Gastrocnemius medialis (tissue), 4 donors: ENCODE measurements at regions of chr12 and their contacts with region 1.

Region 1: DNA sequence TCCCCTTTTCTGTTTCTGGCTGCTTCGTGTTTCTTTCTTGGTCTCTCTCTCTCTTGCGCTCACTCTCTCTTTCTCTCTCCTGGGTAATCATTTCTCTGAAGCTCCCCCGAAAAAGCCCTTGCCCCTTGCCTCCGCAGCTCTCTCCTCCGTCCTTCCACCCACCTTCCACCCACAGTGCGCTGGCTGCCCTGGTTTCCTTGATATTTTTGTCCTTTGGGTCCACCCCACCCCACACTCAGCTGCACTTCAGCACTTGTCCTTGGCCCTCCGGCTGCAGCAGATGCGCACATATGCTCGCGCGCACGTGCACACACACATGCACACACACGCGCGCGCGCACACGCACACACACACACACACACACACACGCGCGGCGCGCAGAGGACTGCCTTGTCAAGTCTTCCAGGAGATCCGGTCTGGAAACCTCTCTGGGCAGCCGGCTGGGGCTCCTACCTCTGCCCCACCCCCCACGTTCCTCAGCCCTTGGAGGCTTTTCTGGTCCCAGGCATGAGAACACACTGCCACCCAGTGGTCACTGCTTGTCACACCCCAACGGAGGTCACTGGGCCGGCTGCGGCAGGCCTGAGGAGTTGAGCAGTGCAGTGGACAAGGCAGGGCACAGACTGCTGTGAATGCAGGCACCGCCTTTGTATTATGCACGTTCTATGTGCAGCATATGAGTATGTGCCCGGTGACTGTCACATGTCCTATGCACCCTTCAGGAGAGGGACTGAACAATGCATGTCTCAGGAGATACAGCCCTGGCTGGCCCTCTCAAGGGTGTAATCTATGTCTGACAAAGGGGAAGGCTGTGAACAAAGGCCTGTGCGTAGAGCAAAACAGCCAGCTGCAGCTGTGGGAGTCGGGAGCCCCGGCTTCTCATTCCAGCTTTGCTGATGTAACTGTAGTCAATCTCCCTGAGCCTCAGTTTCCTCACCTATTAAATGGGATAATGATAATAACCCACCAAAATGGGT is 6.5 kb downstream of the LAG3 start:
- DNase-seq: peak; percentile 91 to 93
- ATAC-seq: peak; percentile 95 to 99
- H3K4me3 ChIP-seq: peak overlapping the region; percentile 37 to 65 (median 54)
- H3K27ac ChIP-seq: peak overlapping the region; percentile 59 to 73 (median 68)
- H3K4me1 ChIP-seq: peaks cover 9 to 10% of the 10 kb centered on the region in 2 donors
- H3K27me3 ChIP-seq: no peaks in the 10 kb centered on the region
- CTCF ChIP-seq: peak; percentile 96 to 98 (median 97)
- POLR2A ChIP-seq: no peak

Region 2: GRCh38 chr12:6613776-6614512 is 164.9 kb before region 1 on chr12:
- in situ Hi-C with region 1: no loop called
- intact Hi-C with region 1: loop called (anchors 1 kb)
- DNase-seq: peak; percentile 70 to 83
- ATAC-seq: peak; percentile 75 to 81
- H3K4me3 ChIP-seq: no peak overlapping the region
- H3K27ac ChIP-seq: peak overlapping the region; percentile 74 to 93 (median 84)
- H3K4me1 ChIP-seq: peaks cover 16 to 25% of the 10 kb centered on the region in 2 donors
- H3K27me3 ChIP-seq: no peaks in the 10 kb centered on the region
- CTCF ChIP-seq: no peak
- POLR2A ChIP-seq: no peak

Region 3: DNA sequence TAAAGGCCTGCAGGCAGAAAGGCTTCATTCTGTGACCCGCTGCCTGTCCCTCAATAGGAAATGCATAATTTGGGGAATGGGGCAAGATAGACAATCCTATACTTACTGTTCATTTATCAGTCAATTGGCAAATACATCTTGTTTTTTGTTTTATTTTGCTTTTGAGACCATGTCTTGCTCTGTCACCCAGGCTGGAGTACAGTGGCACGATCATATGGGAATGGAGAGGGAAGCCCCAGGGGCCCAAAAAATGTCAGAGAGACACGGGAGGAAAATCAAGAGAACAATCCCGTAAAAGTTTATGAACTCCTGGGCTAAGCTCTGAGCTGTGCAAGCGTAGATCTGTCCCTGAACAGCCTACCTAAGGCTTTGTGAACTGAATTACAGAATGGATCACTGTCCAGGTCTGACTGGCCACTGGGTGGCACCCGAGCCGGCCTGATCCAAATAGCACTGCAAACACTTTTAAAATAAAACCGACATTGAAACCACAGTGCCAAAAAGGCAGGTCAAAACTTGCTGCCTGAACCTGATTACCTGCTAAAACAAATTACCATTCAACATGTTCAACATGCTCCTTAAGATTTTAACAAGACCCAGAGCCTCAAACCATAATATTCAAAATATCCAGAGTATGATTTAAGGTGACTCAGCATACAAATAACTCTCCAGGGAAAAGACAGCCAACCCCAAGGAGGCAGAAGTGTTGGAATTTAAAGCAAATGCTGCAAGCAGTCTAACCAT is 43.2 kb before region 1 on chr12:
- in situ Hi-C with region 1: loop called in 2 of 4 experiments (anchors 5 kb)
- intact Hi-C with region 1: loop called (anchors 1 kb)
- DNase-seq: peak; percentile 43 to 72
- ATAC-seq: peak; percentile 94 to 95
- H3K4me3 ChIP-seq: no peak overlapping the region
- H3K27ac ChIP-seq: peak overlapping the region; percentile 66 to 76 (median 72)
- H3K4me1 ChIP-seq: peaks cover 0 to 9% of the 10 kb centered on the region in 2 donors
- H3K27me3 ChIP-seq: no peaks in the 10 kb centered on the region
- CTCF ChIP-seq: peak; percentile 59 to 78 (median 70)
- POLR2A ChIP-seq: no peak

Region 4: GRCh38 chr12:6742834-6743233 is 36.0 kb before region 1 on chr12:
- in situ Hi-C with region 1: loop called in 2 of 4 experiments (anchors 5 kb)
- intact Hi-C with region 1: no loop called
- DNase-seq: no peak
- ATAC-seq: no peak
- H3K4me3 ChIP-seq: no peak overlapping the region
- H3K27ac ChIP-seq: no peak overlapping the region
- H3K4me1 ChIP-seq: peaks cover 0 to 4% of the 10 kb centered on the region in 2 donors
- H3K27me3 ChIP-seq: no peaks in the 10 kb centered on the region
- CTCF ChIP-seq: no peak
- POLR2A ChIP-seq: no peak

Region 5: GRCh38 chr12:6792522-6793201 is 13.8 kb after region 1 on chr12:
- in situ Hi-C with region 1: no loop called
- intact Hi-C with region 1: no loop called
- DNase-seq: peak; percentile 25
- ATAC-seq: peak in 1 of 2 donors; percentile 51
- H3K4me3 ChIP-seq: no peak overlapping the region
- H3K27ac ChIP-seq: no peak overlapping the region
- H3K4me1 ChIP-seq: no peaks in the 10 kb centered on the region
- H3K27me3 ChIP-seq: peaks cover 0 to 3% (median 0%) of the 10 kb centered on the region in 3 donors
- CTCF ChIP-seq: no peak
- POLR2A ChIP-seq: no peak

Region 6: GRCh38 chr12:6825398-6826124 is 46.7 kb after region 1 on chr12:
- in situ Hi-C with region 1: no loop called
- intact Hi-C with region 1: loop called (anchors 2 kb)
- DNase-seq: peak; percentile 48 to 69
- ATAC-seq: peak; percentile 63 to 75
- H3K4me3 ChIP-seq: no peak overlapping the region
- H3K27ac ChIP-seq: no peak overlapping the region
- H3K4me1 ChIP-seq: peaks cover 3 to 11% of the 10 kb centered on the region in 2 donors
- H3K27me3 ChIP-seq: peaks cover 31 to 78% (median 53%) of the 10 kb centered on the region in 3 donors
- CTCF ChIP-seq: peak; percentile 62 to 85 (median 80)
- POLR2A ChIP-seq: no peak

Region 7: DNA sequence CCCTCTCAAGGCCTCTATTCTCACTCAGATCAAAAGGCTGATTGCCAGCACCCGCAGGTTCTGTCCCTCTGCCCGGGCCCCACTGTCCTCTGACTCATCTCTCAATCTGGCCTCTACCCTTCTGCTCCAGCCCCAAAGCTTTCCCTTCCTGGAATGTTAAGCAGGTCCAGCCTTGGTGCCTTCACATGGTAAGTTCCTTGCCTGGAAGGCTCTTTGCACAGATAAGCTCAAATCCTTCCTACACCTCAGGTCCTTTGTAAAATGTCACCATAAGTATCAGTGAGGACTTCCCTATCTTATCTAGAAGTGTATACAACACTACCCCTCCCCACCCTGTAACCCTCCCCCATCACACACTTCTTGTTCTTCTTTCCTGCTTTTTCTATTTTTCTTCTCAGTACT is 217.2 kb after region 1 on chr12:
- in situ Hi-C with region 1: no loop called
- intact Hi-C with region 1: no loop called
- DNase-seq: peak; percentile 49 to 79
- ATAC-seq: peak; percentile 67 to 69
- H3K4me3 ChIP-seq: no peak overlapping the region
- H3K27ac ChIP-seq: peak overlapping the region; percentile 88 to 91 (median 88)
- H3K4me1 ChIP-seq: peaks cover 39 to 45% of the 10 kb centered on the region in 2 donors
- H3K27me3 ChIP-seq: no peaks in the 10 kb centered on the region
- CTCF ChIP-seq: no peak
- POLR2A ChIP-seq: no peak

Region 8: GRCh38 chr12:7039403-7039802 is 260.5 kb after region 1 on chr12:
- in situ Hi-C with region 1: no loop called
- intact Hi-C with region 1: no loop called
- DNase-seq: no peak
- ATAC-seq: no peak
- H3K4me3 ChIP-seq: no peak overlapping the region
- H3K27ac ChIP-seq: no peak overlapping the region
- H3K4me1 ChIP-seq: no peaks in the 10 kb centered on the region
- H3K27me3 ChIP-seq: no peaks in the 10 kb centered on the region
- CTCF ChIP-seq: no peak
- POLR2A ChIP-seq: no peak